Gastrocnemius medialis (tissue), 4 donors: ENCODE measurements at regions of chr5 and their contacts with region 1.

Region 1: DNA sequence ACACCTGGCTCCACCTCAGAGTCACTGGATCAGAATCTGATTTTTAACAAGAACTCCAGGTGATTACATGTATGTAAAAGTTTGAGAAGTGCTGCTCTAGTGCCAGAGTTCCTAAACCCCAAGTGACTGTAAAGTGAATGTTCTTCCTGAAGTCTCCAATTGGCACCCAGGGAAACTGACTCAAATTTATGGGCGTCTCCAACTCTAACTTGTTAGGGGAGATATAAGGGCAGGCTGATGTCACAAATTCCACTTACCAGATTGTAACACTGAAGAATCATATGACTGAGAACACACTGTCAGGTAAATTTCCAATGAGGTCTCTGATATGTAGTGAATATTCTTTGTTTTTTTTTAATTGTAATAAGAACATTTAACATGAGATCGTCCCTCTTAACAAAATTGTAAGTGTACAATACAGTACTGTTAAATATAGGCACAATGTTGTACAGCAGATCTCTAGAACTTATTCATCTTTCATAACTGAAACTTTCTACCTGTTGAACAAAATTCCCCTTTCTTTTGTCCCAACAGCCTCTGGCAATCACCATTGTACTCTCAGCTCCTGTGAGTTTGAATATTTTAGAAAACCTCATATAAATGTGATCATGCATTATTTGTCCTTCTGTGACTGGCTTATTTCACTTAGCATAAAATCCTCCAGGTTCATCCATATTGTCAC is 10.5 kb upstream of the PRLR start:
- DNase-seq: no peak
- ATAC-seq: no peak
- H3K4me3 ChIP-seq: no peak overlapping the region
- H3K27ac ChIP-seq: no peak overlapping the region
- H3K4me1 ChIP-seq: no peaks in the 10 kb centered on the region
- H3K27me3 ChIP-seq: no peaks in the 10 kb centered on the region
- CTCF ChIP-seq: no peak
- POLR2A ChIP-seq: no peak

Region 2: DNA sequence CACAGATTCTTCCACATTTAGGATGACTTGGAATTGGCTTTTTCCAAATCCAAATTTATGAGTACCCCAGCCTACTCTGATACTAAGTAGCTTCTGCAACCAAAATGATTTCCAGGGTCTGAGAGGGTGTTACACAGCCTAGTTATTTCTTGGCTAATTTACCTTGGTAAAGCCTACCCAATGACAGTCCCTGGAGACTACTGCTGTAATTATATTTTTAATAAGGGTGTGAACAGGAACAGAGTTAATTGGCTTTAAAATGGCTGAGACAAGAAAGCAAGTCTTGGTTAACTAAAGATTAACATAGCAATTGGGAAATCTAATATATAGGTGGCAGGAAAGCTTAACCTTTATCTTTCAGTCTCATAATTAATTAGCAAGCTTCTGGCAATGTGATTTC is 19.8 kb before region 1 on chr5:
- in situ Hi-C with region 1: no loop called
- intact Hi-C with region 1: loop called (anchors 1 kb)
- DNase-seq: no peak
- ATAC-seq: no peak
- H3K4me3 ChIP-seq: no peak overlapping the region
- H3K27ac ChIP-seq: no peak overlapping the region
- H3K4me1 ChIP-seq: no peaks in the 10 kb centered on the region
- H3K27me3 ChIP-seq: no peaks in the 10 kb centered on the region
- CTCF ChIP-seq: no peak
- POLR2A ChIP-seq: no peak

Region 3: GRCh38 chr5:35302544-35302943 is 61.8 kb after region 1 on chr5:
- in situ Hi-C with region 1: no loop called
- intact Hi-C with region 1: no loop called
- DNase-seq: no peak
- ATAC-seq: no peak
- H3K4me3 ChIP-seq: no peak overlapping the region
- H3K27ac ChIP-seq: no peak overlapping the region
- H3K4me1 ChIP-seq: no peaks in the 10 kb centered on the region
- H3K27me3 ChIP-seq: no peaks in the 10 kb centered on the region
- CTCF ChIP-seq: no peak
- POLR2A ChIP-seq: no peak

Region 4: DNA sequence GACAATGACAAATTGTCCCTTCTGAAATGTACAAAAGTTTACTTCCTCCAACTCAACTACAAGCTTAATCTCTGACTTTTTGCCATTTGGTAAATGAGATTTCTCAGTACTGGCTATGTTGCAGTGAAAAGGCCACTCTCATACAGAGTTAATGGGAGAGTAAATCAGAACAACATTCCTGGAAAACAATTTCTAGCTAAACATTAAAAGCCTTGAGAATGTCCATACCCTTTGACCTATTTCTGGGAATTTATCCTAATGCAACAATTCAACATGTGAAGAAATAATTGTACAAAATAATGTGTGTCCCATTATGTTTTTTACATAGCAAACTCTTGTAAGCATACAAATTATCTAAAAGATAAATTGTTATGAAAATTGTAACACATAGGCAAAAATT is 320.6 kb after region 1 on chr5:
- in situ Hi-C with region 1: no loop called
- intact Hi-C with region 1: no loop called
- DNase-seq: no peak
- ATAC-seq: no peak
- H3K4me3 ChIP-seq: no peak overlapping the region
- H3K27ac ChIP-seq: no peak overlapping the region
- H3K4me1 ChIP-seq: no peaks in the 10 kb centered on the region
- H3K27me3 ChIP-seq: no peaks in the 10 kb centered on the region
- CTCF ChIP-seq: no peak
- POLR2A ChIP-seq: no peak